ENCODE measurements at regions of chr1 and their contacts with region 1.

Region 1: GRCh38 chr1:146007506-146008133 is 11.2 kb upstream of the TXNIP start:
- DNase-seq: no peak
- ATAC-seq: no peak
- H3K4me3 Mint-ChIP-seq: no peak overlapping the region
- H3K27ac Mint-ChIP-seq: peak overlapping the region; percentile 96
- H3K4me1 Mint-ChIP-seq: peaks cover 26% of the 10 kb centered on the region
- H3K27me3 Mint-ChIP-seq: no peaks in the 10 kb centered on the region
- CTCF ChIP-seq: no peak

Region 2: GRCh38 chr1:145777357-145778145 is 230.1 kb before region 1 on chr1:
- CTCF ChIA-PET with region 1: no interaction called
- POLR2A ChIA-PET with region 1: no interaction called
- intact Hi-C with region 1: no loop called
- DNase-seq: no peak
- ATAC-seq: no peak
- H3K4me3 Mint-ChIP-seq: no peak overlapping the region
- H3K27ac Mint-ChIP-seq: no peak overlapping the region
- H3K4me1 Mint-ChIP-seq: no peaks in the 10 kb centered on the region
- H3K27me3 Mint-ChIP-seq: no peaks in the 10 kb centered on the region
- CTCF ChIP-seq: no peak

Region 3: GRCh38 chr1:145990249-145991097 is 17.1 kb before region 1 on chr1:
- CTCF ChIA-PET with region 1: interaction called, 4 read pairs
- POLR2A ChIA-PET with region 1: interaction called, 53 read pairs
- intact Hi-C with region 1: no loop called
- DNase-seq: no peak
- ATAC-seq: no peak
- H3K4me3 Mint-ChIP-seq: no peak overlapping the region
- H3K27ac Mint-ChIP-seq: peak overlapping the region; percentile 61
- H3K4me1 Mint-ChIP-seq: peaks cover 72% of the 10 kb centered on the region
- H3K27me3 Mint-ChIP-seq: no peaks in the 10 kb centered on the region
- CTCF ChIP-seq: no peak